K562 (cell line): ENCODE measurements at regions of chr3 and their contacts with region 1.

Region 1: GRCh38 chr3:125165189-125165947 is 47.2 kb downstream of the SLC12A8 start:
- DNase-seq: no peak
- ATAC-seq: peak; percentile 82
- H3K4me3 ChIP-seq: no peak overlapping the region
- H3K27ac ChIP-seq: no peak overlapping the region
- H3K4me1 ChIP-seq: peaks cover 0 to 4% of the 10 kb centered on the region in 2 experiments; a peak in 3 of 5 replicates
- H3K27me3 ChIP-seq: peaks cover 5 to 53% of the 10 kb centered on the region in 2 experiments
- CTCF ChIP-seq: peak; percentile 10 to 43 (median 37); a peak in 2 of 6 replicates
- EP300 ChIP-seq: no peak
- POLR2A ChIP-seq: no peak
- RAD21 ChIP-seq: peak in 1 of 2 experiments; percentile 33; a peak in 2 of 4 replicates

Region 2: GRCh38 chr3:124761250-124761796 is 404.0 kb before region 1 on chr3:
- CTCF ChIA-PET with region 1: no interaction called
- POLR2A ChIA-PET with region 1: no interaction called
- in situ Hi-C with region 1: no loop called
- intact Hi-C with region 1: loop called (anchors 10 kb)
- DNase-seq: peak; percentile 62 to 77 (median 66)
- ATAC-seq: peak; percentile 91
- H3K4me3 ChIP-seq: no peak overlapping the region
- H3K27ac ChIP-seq: no peak overlapping the region
- H3K4me1 ChIP-seq: no peaks in the 10 kb centered on the region; a peak in 1 of 5 replicates
- H3K27me3 ChIP-seq: no peaks in the 10 kb centered on the region
- CTCF ChIP-seq: peak; percentile 83 to 88 (median 86)
- EP300 ChIP-seq: no peak
- POLR2A ChIP-seq: no peak
- RAD21 ChIP-seq: peak; percentile 81 to 89

Region 3: DNA sequence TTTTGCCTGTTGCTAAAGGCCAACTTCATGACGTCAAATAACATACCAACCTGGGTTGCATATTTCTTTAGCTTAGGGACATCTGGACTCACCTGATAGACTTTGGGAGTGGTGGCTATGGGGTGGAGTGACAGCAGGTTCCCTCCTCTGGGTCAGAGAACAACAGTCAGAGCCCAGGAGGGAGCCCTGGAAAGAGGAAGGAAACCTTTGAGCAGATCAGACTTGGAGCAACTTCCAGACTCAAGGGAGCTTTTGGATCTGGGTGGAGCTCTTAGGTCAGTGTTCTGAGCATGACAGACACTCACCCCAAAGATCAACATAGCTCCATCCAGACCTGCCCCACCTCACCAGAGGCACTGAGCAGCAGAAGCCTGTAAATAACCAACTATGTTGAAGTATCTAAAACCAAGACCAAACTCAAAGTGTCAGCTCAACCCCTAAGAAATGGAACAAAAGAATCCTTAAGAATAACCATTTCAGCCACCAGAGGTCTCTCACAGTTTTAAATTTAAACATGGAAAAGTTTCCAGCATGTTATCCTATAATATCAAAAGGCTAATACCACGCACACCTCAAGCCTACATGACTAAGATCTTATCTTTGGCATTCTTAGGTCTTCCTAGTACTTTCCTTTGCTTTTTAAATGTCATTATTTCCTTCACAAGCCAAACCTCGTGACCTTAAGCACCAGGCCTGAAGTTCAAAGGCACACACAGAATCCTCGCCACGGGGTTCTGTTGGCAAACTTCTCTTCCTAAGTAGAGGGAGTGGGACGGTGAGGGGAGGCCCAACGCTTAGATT is 378.7 kb before region 1 on chr3:
- CTCF ChIA-PET with region 1: no interaction called
- POLR2A ChIA-PET with region 1: no interaction called
- in situ Hi-C with region 1: no loop called
- intact Hi-C with region 1: no loop called
- DNase-seq: no peak
- ATAC-seq: no peak
- H3K4me3 ChIP-seq: no peak overlapping the region
- H3K27ac ChIP-seq: no peak overlapping the region
- H3K4me1 ChIP-seq: no peaks in the 10 kb centered on the region; a peak in 1 of 5 replicates
- H3K27me3 ChIP-seq: no peaks in the 10 kb centered on the region
- CTCF ChIP-seq: peak in 1 of 3 experiments; percentile 44; a peak in 2 of 6 replicates
- EP300 ChIP-seq: no peak
- POLR2A ChIP-seq: no peak
- RAD21 ChIP-seq: peak; percentile 51 to 62

Region 4: DNA sequence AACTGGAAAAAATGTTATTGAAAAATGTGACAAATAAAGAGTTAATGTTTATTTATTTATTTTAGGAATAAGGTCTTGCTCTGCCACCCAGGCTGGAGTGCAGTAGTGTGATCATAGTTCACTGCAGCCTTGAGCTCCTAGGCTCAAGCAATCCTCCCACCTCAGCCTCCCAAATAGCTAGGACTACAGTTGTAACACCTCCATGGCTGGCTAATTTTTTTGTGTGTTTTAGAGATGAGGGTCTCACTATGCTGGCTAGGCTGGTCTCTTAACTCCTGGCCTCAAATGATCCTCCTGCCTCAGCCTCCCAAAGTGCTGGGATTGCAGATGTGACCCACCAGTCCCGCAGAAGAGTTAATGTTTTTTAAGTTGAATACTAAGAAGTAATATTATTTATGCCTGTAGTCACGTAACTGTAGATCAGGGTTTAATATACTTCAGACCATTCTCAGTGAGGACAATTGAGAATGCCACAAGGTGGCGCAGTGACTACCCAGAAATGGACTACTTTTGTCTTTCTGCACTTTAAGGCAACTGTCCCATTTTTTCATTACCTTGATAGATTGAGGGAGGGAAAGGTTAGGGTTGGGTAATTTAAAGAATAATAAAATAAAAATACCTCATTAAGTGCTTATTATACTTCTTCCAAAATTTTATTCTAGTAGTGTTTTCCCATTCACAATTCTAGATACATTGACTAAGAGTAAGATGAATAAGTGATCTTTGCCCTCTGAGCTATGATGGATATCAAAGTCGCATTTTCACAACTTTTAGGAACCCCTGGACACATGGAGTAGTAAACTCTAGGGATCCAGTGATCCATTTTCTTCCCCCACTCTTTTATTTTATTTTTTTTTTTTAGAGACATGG is 236.8 kb before region 1 on chr3:
- CTCF ChIA-PET with region 1: no interaction called
- POLR2A ChIA-PET with region 1: no interaction called
- in situ Hi-C with region 1: no loop called
- intact Hi-C with region 1: loop called (anchors 5 kb)
- DNase-seq: peak; percentile 12 to 63 (median 16)
- ATAC-seq: peak; percentile 78
- H3K4me3 ChIP-seq: no peak overlapping the region
- H3K27ac ChIP-seq: no peak overlapping the region
- H3K4me1 ChIP-seq: no peaks in the 10 kb centered on the region
- H3K27me3 ChIP-seq: no peaks in the 10 kb centered on the region
- CTCF ChIP-seq: peak; percentile 42 to 68 (median 56); a peak in 5 of 6 replicates
- EP300 ChIP-seq: no peak
- POLR2A ChIP-seq: no peak
- RAD21 ChIP-seq: peak; percentile 51 to 75

Region 5: DNA sequence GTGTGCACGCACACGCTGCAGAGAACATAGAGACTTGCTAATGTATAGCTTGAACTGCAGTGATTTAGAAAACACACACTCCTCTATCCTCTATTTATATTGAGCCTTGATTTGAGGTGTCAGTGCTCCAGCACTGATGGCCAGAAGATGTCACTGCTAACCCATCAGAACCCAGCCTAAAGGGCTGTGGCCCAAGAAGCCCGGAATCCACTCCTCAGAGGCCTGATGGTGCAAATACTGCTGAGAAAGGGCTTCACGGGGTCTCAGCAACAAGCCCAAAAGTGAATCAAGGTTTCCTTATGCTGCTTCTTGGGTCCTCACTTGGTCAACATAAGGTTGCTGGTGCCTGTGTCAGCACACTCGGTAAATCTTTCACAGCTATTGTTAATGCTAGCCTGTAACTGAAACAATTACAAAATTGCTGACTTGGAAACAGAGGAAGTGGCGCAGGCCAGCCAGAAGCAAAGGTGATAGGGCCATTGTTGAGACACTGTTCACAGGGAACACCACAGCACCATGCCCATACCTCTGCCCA is 169.8 kb before region 1 on chr3:
- CTCF ChIA-PET with region 1: no interaction called
- POLR2A ChIA-PET with region 1: no interaction called
- in situ Hi-C with region 1: no loop called
- intact Hi-C with region 1: loop called (anchors 2 kb)
- DNase-seq: peak; percentile 8 to 47 (median 28)
- ATAC-seq: peak; percentile 86
- H3K4me3 ChIP-seq: no peak overlapping the region
- H3K27ac ChIP-seq: no peak overlapping the region
- H3K4me1 ChIP-seq: no peaks in the 10 kb centered on the region; a peak in 1 of 5 replicates
- H3K27me3 ChIP-seq: peaks cover 18 to 51% of the 10 kb centered on the region in 2 experiments; a peak in 4 of 5 replicates
- CTCF ChIP-seq: peak; percentile 47 to 73 (median 57)
- EP300 ChIP-seq: no peak
- POLR2A ChIP-seq: no peak
- RAD21 ChIP-seq: peak; percentile 75 to 82

Region 6: DNA sequence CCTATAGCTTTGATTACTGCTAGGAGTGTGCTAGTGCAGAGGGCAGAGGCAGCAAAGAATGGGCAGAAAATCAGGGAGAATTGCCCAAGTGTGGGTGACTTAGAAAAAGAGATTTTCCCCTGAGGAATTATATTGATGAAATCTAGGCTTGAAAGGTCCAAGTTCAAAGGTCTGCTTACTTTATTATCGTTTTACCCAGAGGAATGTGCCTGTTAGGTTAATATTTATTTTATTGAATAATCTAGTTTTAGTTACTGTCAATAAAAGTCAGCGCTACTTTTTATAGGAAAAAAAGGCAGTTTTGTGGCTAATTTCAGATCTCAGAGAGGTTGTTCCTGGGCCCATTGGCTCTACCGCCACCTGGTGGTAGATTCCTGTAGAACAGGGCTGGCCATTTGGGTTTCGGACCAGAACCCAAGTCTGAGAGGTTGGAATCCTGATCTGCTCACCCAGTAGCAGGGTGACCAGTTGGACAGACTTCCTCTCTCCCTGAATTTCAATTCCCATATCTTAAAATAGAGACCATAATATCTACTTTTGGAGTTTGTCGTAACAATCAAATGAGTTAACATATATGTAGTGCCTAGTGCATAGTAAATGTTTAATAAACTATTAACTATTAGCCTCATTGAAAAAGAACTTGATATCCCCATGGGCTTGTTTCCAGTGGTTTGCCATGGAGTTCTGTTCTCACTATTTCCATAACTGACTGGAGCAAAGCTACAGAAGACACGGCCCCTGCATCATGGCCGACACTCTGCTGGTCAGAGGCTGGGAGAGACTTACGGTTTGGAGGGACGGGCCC is 272.5 kb after region 1 on chr3:
- CTCF ChIA-PET with region 1: interaction called, 3 read pairs
- POLR2A ChIA-PET with region 1: no interaction called
- in situ Hi-C with region 1: no loop called
- intact Hi-C with region 1: loop called (anchors 5 kb)
- DNase-seq: peak; percentile 42 to 71 (median 53)
- ATAC-seq: 0 out of 3 replicates have a peak, but pooled peaks have one; percentile 11
- H3K4me3 ChIP-seq: no peak overlapping the region
- H3K27ac ChIP-seq: no peak overlapping the region
- H3K4me1 ChIP-seq: peaks cover 37 to 42% of the 10 kb centered on the region in 2 experiments; a peak in 4 of 5 replicates
- H3K27me3 ChIP-seq: no peaks in the 10 kb centered on the region
- CTCF ChIP-seq: peak; percentile 73 to 86 (median 73)
- EP300 ChIP-seq: no peak
- POLR2A ChIP-seq: no peak
- RAD21 ChIP-seq: peak; percentile 63 to 78